ENCODE measurements at regions of chr10 and their contacts with region 1.

Region 1: GRCh38 chr10:37520488-37520887 is 336.9 kb downstream of the ZNF248 start:
- DNase-seq: no peak
- H3K4me3 ChIP-seq: no peak overlapping the region
- H3K27ac ChIP-seq: no peak overlapping the region
- H3K4me1 ChIP-seq: no peaks in the 10 kb centered on the region
- H3K27me3 ChIP-seq: no peaks in the 10 kb centered on the region
- CTCF ChIP-seq: no peak

Region 2: DNA sequence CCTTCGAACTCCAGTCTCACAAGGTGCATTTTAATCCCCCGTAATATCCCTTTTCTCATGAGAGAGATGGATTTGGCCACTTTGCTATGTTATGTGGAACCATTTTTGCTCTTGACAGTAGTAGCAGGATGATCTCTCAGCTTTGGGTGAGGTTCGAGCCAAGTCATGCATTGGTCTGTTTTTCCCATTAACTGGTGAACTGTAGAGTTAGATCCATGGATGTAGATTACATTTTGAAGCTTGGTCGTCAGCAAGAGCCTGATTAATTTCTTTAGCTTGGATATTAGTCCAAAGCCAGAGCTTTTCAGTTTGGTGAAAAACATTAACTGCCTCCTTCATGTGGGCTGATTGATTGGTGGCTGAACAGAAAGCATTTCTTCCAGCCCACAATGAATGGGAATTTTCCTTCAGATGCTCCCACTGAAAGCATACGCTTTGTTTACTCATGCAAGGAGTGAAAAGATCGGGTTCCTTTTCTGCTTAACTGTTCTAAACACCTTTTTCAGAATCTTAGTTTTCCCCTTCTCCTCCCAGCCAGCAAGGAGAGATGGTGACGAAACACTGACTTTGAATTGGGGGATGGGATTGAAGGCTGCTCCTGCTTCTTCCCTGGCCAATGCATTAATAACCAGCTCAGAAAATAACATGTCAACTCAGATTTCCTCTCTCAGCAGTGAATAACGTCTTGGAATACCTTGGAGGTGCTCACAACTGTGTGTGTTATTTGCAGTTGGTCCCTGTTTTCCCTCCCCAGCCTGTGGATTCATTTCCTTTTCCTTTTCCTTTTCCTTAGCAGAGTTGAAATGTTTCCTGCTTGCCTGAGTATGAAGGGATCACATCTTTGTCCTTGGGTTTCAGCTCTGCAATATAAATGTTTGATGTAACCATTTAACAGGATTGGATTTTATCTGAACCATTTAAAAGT is 1526.6 kb before region 1 on chr10:
- CTCF ChIA-PET with region 1: interaction called, 10 read pairs
- POLR2A ChIA-PET with region 1: no interaction called
- intact Hi-C with region 1: no loop called
- DNase-seq: no peak
- H3K4me3 ChIP-seq: no peak overlapping the region
- H3K27ac ChIP-seq: no peak overlapping the region
- H3K4me1 ChIP-seq: no peaks in the 10 kb centered on the region
- H3K27me3 ChIP-seq: no peaks in the 10 kb centered on the region
- CTCF ChIP-seq: no peak

Region 3: GRCh38 chr10:37754538-37755323 is 234.2 kb after region 1 on chr10:
- CTCF ChIA-PET with region 1: no interaction called
- POLR2A ChIA-PET with region 1: no interaction called
- intact Hi-C with region 1: loop called (anchors 5 kb)
- DNase-seq: peak in 1 of 2 experiments; percentile 24
- H3K4me3 ChIP-seq: no peak overlapping the region
- H3K27ac ChIP-seq: no peak overlapping the region
- H3K4me1 ChIP-seq: no peaks in the 10 kb centered on the region
- H3K27me3 ChIP-seq: no peaks in the 10 kb centered on the region
- CTCF ChIP-seq: peak; percentile 64

Measured in PC-9 (cell line).